Panc1 (cell line): ENCODE measurements at regions of chr2 and their contacts with region 1.

Region 1: DNA sequence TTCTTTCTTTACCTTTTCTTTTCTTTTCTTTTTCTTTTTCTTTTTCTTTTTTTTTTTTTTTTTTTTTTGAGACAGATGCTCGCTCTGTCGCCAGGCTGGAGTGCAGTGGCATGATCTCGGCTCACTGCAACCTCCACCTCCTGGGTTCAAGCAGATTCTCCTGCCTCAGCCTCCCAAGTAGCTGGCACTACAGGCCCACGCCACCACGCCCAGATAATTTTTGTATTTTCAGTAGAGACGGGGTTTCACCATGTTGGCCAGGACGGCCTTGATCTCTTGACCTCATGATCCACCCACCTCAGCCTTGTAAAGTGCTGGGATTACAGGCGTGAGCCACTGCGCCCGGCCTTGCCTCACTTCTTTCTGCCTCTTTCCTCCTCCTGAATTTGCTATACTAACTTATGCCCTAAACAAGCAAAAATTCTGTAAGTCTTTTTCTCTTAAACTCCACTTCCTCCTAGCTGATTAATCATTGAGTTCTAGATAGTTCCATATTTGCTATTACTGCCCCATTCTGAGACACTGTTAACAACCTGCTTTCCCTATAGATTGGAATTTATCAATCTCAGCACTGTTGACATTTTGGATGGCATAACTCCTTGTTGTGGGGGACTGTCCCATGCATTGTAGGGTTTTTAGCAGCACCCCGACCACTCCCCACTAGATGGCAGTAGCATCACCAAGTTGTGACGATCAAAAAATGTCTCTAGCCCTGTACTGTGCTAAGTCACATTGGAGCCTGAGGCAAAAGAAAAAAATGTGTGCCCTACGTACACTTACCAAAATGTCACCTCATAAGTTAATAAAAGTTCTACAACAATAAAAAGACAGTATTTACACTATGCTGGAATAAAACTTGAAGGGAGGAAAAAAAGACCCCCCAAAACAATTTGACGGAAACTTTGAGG is 16.4 kb upstream of the THADA start:
- DNase-seq: peak; percentile 64
- ATAC-seq: peak; percentile 95
- H3K4me3 ChIP-seq: no peak overlapping the region
- H3K27ac ChIP-seq: peak overlapping the region; percentile 52
- H3K4me1 ChIP-seq: peaks cover 5% of the 10 kb centered on the region
- H3K27me3 ChIP-seq: no peaks in the 10 kb centered on the region
- CTCF ChIP-seq: peak; percentile 90

Region 2: GRCh38 chr2:43701111-43701510 is 88.9 kb after region 1 on chr2:
- CTCF ChIA-PET with region 1: no interaction called
- POLR2A ChIA-PET with region 1: interaction called, 14 read pairs
- in situ Hi-C with region 1: no loop called
- intact Hi-C with region 1: no loop called
- DNase-seq: no peak
- ATAC-seq: no peak
- H3K4me3 ChIP-seq: no peak overlapping the region
- H3K27ac ChIP-seq: no peak overlapping the region
- H3K4me1 ChIP-seq: no peaks in the 10 kb centered on the region
- H3K27me3 ChIP-seq: no peaks in the 10 kb centered on the region
- CTCF ChIP-seq: no peak

Region 3: GRCh38 chr2:43773876-43774613 is 161.8 kb after region 1 on chr2 and contains the start of gene DYNC2LI1:
- CTCF ChIA-PET with region 1: no interaction called
- POLR2A ChIA-PET with region 1: no interaction called
- in situ Hi-C with region 1: no loop called
- intact Hi-C with region 1: loop called (anchors 10 kb)
- DNase-seq: peak; percentile 80
- ATAC-seq: peak; percentile 100
- H3K4me3 ChIP-seq: peak within 1 kb of the TSS; percentile 85 to 87
- H3K27ac ChIP-seq: peak within 1 kb of the TSS; percentile 89
- H3K4me1 ChIP-seq: peaks cover 4% of the 10 kb centered on the region; the same call in 1 of the 2 replicates
- H3K27me3 ChIP-seq: no peaks in the 10 kb centered on the region
- CTCF ChIP-seq: no peak
- total RNA-seq, gene DYNC2LI1: 8.5 TPM

Region 4: DNA sequence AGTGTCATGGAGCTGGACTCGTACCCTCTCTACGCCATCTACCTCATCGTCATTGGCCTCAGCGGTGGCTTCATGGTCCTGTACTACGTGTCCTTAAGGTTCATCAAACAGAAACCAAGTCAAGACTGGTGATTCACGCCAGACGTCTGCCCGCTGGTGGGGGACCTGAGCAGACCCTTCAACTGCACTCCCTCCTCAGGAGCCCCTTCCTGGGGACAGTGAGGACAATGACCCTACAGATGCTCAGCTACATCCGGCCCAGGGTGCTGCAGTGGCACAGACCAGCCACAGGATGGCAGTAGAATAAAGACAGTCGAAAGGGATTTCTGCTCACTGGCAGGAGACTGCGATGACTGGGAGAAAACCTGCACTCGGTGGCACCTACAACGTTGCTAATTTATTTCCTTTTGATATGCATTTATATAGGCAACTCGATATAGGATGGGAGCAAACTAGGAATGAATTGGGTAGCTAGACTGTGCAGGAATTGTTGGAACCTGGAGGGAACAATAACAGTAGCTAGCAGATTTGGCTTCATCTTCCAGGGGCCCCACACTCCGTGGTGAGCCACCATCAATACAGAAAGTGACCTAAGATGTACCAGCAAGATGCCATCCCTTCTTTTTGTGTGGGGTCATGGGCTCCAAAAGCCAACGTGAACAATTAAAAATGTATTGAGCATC is 265.7 kb after region 1 on chr2:
- CTCF ChIA-PET with region 1: no interaction called
- POLR2A ChIA-PET with region 1: no interaction called
- in situ Hi-C with region 1: no loop called
- intact Hi-C with region 1: loop called (anchors 5 kb)
- DNase-seq: peak; percentile 55
- ATAC-seq: peak; percentile 87
- H3K4me3 ChIP-seq: no peak overlapping the region
- H3K27ac ChIP-seq: no peak overlapping the region
- H3K4me1 ChIP-seq: peaks cover 3% of the 10 kb centered on the region
- H3K27me3 ChIP-seq: no peaks in the 10 kb centered on the region
- CTCF ChIP-seq: peak; percentile 96

Region 5: DNA sequence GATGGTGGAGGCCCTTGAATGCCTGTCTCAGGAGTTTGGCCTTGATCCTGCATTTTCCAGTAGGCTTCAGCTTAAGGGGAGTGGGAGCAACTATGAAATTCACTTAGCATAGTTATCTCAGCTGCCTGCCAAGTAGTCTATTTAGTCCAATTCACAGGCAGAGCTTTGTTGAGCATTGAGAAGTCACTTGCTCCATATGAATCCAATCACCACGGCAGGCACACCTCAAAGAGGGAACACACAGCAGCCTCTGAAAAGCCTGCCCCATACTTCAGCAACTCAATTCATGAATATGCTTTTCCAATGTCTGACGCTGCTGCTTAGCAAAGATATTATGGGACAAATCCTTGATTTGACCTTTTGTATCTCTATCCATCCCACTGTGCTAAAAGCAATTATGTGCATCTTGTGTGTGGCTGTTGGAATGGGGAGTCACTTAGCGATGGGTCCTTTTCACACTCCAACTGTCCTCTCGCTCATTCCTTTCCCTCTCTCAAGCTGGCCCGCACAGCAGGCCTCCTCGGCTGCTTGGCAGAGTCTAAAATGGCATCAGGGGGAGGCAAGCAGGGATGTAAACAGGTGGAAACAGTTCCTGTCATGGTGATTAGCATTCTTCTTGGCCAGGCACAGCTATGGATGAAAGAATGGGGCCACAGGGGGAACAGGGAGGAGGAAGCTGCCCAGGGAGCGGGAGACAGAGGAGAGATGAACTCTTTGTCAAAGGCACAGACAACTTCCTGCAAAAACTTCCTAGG is 439.5 kb after region 1 on chr2:
- CTCF ChIA-PET with region 1: no interaction called
- POLR2A ChIA-PET with region 1: no interaction called
- in situ Hi-C with region 1: no loop called
- intact Hi-C with region 1: no loop called
- DNase-seq: no peak
- ATAC-seq: no peak
- H3K4me3 ChIP-seq: no peak overlapping the region
- H3K27ac ChIP-seq: no peak overlapping the region
- H3K4me1 ChIP-seq: no peaks in the 10 kb centered on the region
- H3K27me3 ChIP-seq: no peaks in the 10 kb centered on the region
- CTCF ChIP-seq: no peak